Activated CD8-positive, alpha-beta T cell treated with anti-CD3 and anti-CD28 coated beads for 36 hours (primary cell): ENCODE measurements at regions of chr3 and their contacts with region 1.

Region 1: GRCh38 chr3:46276502-46277099 is 34.3 kb downstream of the CCR3 start:
- DNase-seq: peak; percentile 86
- ATAC-seq: peak; percentile 81
- H3K4me3 Mint-ChIP-seq: no peak overlapping the region
- H3K27ac Mint-ChIP-seq: no peak overlapping the region
- H3K4me1 Mint-ChIP-seq: peaks cover 41% of the 10 kb centered on the region
- H3K27me3 Mint-ChIP-seq: peaks cover 5% of the 10 kb centered on the region
- CTCF ChIP-seq: peak; percentile 87

Region 2: DNA sequence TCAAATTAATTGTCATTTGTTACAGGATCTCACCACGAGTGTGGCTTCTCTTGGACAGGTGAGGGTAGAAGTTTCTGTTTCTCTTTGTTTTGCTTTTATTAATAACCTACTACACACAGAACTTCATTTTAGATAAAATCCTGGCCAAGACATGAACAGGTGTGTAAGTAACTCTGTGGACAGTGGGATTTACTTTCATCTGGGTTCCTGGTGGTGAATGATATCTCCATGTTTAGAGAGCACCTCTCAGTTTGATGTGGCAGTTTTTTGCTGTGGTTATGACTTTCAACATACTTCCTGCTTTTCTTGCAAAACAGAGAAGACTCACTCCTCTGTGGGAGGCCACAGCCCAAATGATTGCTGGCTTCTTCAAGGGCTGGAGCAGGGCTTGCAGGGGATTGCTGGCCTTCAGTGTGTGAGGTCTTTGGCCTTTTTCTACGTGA is 178.3 kb before region 1 on chr3:
- CTCF ChIA-PET with region 1: interaction called, 3 read pairs
- POLR2A ChIA-PET with region 1: interaction called, 3 read pairs
- intact Hi-C with region 1: loop called (anchors 5 kb)
- DNase-seq: peak; percentile 76
- ATAC-seq: peak; percentile 54
- H3K4me3 Mint-ChIP-seq: peak overlapping the region; percentile 10
- H3K27ac Mint-ChIP-seq: peak overlapping the region; percentile 87
- H3K4me1 Mint-ChIP-seq: peaks cover 41% of the 10 kb centered on the region
- H3K27me3 Mint-ChIP-seq: peaks cover 25% of the 10 kb centered on the region
- CTCF ChIP-seq: no peak

Region 3: GRCh38 chr3:46266598-46266997 is 10.0 kb before region 1 on chr3:
- CTCF ChIA-PET with region 1: interaction called, 23 read pairs
- POLR2A ChIA-PET with region 1: interaction called, 6 read pairs
- intact Hi-C with region 1: no loop called
- DNase-seq: no peak
- ATAC-seq: no peak
- H3K4me3 Mint-ChIP-seq: no peak overlapping the region
- H3K27ac Mint-ChIP-seq: no peak overlapping the region
- H3K4me1 Mint-ChIP-seq: peaks cover 25% of the 10 kb centered on the region
- H3K27me3 Mint-ChIP-seq: peaks cover 12% of the 10 kb centered on the region
- CTCF ChIP-seq: no peak

Region 4: GRCh38 chr3:46297658-46298463 is 21.3 kb after region 1 on chr3:
- CTCF ChIA-PET with region 1: interaction called, 11 read pairs
- POLR2A ChIA-PET with region 1: interaction called, 5 read pairs
- intact Hi-C with region 1: loop called (anchors 2 kb)
- DNase-seq: no peak
- ATAC-seq: no peak
- H3K4me3 Mint-ChIP-seq: no peak overlapping the region
- H3K27ac Mint-ChIP-seq: peak overlapping the region; percentile 87
- H3K4me1 Mint-ChIP-seq: peaks cover 87% of the 10 kb centered on the region
- H3K27me3 Mint-ChIP-seq: peaks cover 4% of the 10 kb centered on the region
- CTCF ChIP-seq: no peak